ENCODE measurements at regions of chr7 and their contacts with region 1.

Region 1: DNA sequence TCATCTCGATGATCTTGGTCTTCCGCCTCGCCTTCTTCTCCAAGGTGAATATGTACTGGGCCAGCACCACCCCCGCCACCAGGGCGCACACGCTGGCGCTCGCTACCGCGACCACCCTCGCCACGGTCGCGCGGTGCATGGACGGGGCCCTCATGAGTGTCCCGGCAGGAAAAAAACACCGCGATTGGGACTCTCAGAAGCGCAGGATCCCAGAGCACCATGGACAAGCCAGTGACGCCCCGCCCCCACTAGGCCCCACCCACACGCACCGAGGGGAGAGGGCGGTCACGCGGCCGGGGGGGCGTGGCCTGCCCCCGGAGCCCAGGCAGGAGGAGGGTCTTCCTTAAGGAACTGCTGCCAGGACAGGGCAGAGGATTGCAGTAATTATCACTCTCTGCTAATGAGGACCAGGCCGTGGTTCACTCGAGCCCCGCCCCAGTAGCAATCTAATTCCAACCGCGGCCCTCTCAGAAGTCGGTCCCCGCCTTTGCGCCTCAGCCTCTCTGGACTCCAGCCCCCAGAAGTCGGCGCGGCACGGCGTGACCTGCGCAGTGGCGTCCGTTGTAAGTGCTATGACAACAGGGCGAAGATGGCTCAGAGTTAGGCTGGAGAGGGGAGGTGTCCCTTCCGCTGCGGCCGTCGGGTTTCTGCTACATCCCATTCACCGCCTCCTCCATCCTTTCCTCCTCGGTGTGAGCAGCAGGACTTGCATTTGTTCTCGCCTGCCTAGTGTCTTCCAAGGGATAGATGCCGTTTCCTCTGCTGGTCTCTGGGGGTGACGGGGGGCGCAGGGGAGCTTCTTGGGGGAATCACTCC is at the start of gene BBS9:
- DNase-seq: peak; percentile 96 to 97
- ATAC-seq: peak; percentile 100
- H3K4me3 ChIP-seq: peak within 1 kb of the TSS; percentile 52 to 71
- H3K27ac ChIP-seq: peak within 1 kb of the TSS in 1 of 2 donors; percentile 49
- H3K4me1 ChIP-seq: peaks cover 0 to 7% of the 10 kb centered on the region in 2 donors
- H3K27me3 ChIP-seq: no peaks in the 10 kb centered on the region
- total RNA-seq, gene BBS9: 19.9 to 37.2 TPM

Region 2: DNA sequence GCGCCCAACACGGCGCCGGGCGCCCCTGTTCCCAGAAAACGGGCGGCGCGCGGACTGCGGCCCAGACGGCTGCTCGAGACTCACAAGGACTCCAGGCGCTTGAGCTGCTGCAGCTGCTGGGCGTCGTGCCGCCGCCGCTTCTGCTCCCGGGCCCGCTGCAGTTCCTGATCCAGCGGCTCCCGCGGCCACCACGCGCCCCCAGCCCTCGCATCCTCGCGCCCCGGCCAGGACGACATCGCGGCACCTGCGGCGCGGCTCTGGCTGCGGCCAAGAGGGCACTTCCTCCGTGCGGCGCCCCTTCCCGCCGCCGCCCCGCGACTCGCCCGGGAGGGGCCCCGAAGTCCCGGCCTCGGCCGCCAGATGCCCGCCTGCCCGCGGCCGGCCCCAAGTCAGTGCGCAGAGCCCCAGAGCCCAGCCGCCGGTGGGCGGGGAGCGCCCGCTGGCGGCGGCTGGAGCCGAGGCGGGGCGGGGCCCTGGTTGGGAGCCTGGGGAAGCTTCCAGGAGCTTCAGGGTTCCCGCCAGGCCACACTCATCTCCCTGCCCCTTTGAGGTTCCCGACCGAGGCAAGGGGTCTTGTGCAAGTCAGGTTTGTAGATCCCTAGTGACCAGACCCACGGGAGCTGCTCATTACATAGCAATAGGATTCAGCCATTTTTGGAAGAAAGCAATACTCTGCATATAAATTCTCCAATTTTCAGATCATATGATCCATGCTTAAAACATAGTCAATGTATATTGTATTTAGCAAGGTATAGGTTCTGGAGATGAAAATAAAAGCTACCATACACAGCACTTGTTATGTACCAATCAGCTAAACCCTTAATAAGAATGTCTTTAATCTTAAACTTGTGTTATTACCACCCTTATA is 186.2 kb before region 1 on chr7:
- intact Hi-C with region 1: no loop called
- DNase-seq: peak; percentile 86 to 93
- ATAC-seq: peak; percentile 97
- H3K4me3 ChIP-seq: peak overlapping the region; percentile 61 to 92
- H3K27ac ChIP-seq: peak overlapping the region; percentile 0 to 85
- H3K4me1 ChIP-seq: no peaks in the 10 kb centered on the region
- H3K27me3 ChIP-seq: no peaks in the 10 kb centered on the region

Region 3: DNA sequence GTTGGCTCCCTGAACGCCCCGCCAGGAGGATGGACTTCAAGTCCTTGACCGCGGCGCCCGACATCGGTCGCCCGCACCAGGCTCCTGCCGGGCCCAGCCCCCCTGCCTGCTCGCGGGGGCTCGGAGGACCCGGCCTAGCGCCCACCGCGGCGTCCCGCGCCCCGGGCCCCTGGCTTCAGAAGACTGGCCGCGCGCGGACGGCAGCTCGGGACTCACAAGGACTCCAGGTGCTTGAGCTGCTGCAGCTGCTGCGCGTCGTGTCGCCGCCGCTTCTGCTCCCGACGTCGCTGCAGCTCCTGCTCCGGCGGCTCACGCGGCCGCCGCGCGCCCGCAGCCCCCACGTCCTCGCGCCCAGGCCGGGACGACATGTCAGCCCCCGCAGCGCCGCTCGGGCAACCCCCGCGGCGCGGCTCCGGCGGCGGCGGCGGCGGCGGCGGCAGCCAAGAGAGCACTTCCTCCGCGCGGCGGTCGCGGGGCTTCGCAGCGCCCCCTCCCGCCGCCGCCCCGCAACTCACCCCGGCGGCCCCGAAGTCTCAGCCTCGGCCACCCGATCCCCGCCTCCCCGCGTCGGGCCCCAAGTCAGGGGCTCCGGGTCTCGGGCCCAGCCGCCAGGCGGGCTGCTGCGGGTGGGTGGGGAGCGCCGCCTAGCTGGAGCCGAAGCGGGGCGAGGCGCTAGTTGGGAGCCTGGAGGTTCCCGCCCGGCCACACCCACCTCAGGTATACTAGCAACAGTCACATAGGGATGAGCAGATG is 20.0 kb before region 1 on chr7 and contains the start of gene RP9:
- intact Hi-C with region 1: loop called in 1 of 2 experiments (anchors 1 kb)
- DNase-seq: peak; percentile 76 to 88
- ATAC-seq: peak; percentile 93
- H3K4me3 ChIP-seq: peak within 1 kb of the TSS; percentile 87 to 93
- H3K27ac ChIP-seq: peak within 1 kb of the TSS in 1 of 2 donors; percentile 64
- H3K4me1 ChIP-seq: peaks cover 5% of the 10 kb centered on the region in 2 donors
- H3K27me3 ChIP-seq: no peaks in the 10 kb centered on the region
- total RNA-seq, gene RP9: 9.4 to 13.8 TPM

Region 4: DNA sequence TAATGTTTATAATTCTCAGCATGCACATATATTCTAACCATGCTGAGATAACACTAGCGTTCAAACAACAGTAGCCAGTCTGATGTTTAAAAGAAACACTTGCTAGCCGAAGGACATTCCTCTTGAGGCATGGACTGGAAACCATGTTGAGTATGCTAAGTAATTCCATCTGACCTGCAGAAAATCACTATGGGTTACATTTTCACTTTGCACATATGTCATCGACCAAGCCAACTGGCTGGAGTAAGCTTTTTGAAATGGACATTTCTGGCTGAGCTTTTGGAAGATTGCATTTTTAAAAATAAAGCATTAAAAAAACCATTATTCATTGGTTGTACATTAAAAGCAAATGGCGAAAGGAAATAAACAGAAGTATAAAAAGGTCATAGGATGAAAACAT is 88.4 kb after region 1 on chr7:
- intact Hi-C with region 1: no loop called
- DNase-seq: no peak
- ATAC-seq: no peak
- H3K4me3 ChIP-seq: no peak overlapping the region
- H3K27ac ChIP-seq: no peak overlapping the region
- H3K4me1 ChIP-seq: no peaks in the 10 kb centered on the region
- H3K27me3 ChIP-seq: no peaks in the 10 kb centered on the region

Region 5: DNA sequence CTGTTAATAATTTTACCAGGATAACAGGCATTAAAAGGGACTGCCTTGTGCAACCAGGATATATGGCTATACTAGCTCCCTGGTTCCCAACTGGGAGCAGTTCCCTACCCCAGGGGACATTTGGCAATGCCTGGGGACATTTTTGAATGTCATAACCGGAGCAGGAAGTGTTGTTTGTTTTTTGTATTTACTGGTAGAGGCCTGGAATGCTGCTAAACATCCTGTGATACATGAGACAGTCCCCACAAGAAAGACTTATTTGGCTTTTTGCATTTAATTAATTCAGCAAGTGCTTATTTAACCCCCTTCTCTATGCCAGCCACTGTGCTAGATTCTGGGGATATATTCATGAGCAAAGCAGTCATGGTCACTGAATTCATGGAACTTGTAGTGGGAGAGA is 181.3 kb after region 1 on chr7:
- intact Hi-C with region 1: no loop called
- DNase-seq: no peak
- ATAC-seq: no peak
- H3K4me3 ChIP-seq: no peak overlapping the region
- H3K27ac ChIP-seq: no peak overlapping the region
- H3K4me1 ChIP-seq: no peaks in the 10 kb centered on the region
- H3K27me3 ChIP-seq: no peaks in the 10 kb centered on the region

Region 6: DNA sequence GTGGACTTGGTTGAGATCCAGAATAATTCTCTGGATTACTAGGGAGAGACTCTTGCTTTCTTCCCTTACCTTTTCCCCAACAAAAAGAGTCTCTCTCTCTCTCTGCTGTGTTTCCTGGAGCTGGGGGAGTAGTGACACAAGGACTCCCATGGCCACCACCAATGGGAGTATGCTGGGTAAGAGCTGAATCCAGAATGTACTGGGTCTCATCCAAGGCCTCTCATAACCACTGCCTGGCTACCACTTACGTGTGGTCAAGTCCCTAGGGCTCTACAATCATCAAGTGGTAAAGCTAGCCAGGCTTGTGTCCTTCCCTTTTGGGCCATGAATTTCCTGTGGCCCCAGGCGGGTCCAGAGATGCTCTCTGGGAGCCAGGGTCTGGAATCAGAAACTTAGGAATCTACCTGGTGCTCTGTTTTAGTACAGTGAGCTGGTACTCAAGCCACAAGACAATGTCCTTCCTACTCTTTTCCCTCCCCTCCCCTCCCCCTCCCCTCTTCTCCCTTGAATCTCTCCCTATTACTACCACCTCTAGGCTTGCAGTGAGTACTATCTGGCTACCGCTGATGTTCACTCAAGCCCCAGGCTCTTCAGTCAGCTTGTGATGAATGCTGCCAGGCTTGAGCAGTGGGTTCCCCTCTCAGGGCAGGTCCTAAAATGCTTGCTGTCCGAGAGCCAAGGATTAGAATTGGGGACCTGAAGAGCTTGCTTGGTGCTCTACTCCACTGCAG is 196.7 kb after region 1 on chr7:
- intact Hi-C with region 1: no loop called
- DNase-seq: no peak
- ATAC-seq: no peak
- H3K4me3 ChIP-seq: no peak overlapping the region
- H3K27ac ChIP-seq: no peak overlapping the region
- H3K4me1 ChIP-seq: no peaks in the 10 kb centered on the region
- H3K27me3 ChIP-seq: no peaks in the 10 kb centered on the region